ENCODE measurements at regions of chr20 and their contacts with region 1.

Region 1: GRCh38 chr20:35664544-35665221 is at the starts of genes CPNE1 and RBM12:
- DNase-seq: peak; percentile 92
- H3K4me3 ChIP-seq: peak within 1 kb of the TSS; percentile 54
- H3K27ac ChIP-seq: peak within 1 kb of the TSS; percentile 89
- H3K4me1 ChIP-seq: peaks cover 11% of the 10 kb centered on the region
- H3K27me3 ChIP-seq: no peaks in the 10 kb centered on the region
- CTCF ChIP-seq: no peak
- total RNA-seq, gene CPNE1: 137 to 152 TPM
- total RNA-seq, gene RBM12: 63.8 to 74.5 TPM

Region 2: DNA sequence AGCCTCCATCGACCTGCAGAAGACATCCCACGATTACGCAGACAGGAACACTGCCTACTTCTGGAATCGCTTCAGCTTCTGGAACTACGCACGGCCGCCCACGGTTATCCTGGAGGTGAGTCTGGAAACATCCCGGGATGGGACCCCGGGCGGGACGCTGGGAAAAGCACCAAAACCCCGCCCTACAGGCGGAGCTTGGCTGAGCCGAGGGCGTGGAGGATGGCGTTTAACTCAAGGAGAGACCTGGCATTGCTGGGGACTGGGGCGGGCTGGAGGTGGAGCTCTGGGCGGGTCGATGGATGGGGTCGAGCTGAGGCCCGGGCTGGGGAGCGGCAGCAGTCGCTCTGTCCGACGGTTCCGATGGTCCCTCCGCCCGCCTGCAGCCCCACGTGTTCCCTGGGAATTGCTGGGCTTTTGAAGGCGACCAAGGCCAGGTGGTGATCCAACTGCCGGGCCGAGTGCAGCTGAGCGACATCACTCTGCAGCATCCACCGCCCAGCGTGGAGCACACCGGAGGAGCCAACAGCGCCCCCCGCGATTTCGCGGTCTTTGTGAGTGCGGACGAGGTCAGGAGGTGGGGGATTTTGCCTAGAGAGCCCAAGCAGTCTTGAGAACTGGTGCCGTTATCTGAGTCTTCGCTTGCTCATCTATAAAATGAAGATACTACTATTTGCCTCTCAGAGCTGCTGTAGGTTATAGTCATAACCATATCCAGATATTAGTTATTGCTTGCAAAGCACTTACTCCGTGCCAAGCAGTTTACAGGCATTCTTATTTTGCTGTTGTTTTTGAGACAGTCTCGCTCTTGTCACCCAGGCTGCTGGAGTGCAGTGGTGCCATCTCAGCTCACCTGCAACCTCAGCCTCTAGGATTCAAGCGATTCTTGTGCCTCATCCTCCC is 45.2 kb before region 1 on chr20:
- intact Hi-C with region 1: loop called (anchors 5 kb)
- DNase-seq: peak; percentile 92
- H3K4me3 ChIP-seq: peak overlapping the region; percentile 53
- H3K27ac ChIP-seq: no peak overlapping the region
- H3K4me1 ChIP-seq: peaks cover 12% of the 10 kb centered on the region
- H3K27me3 ChIP-seq: no peaks in the 10 kb centered on the region
- CTCF ChIP-seq: no peak

Region 3: GRCh38 chr20:35629427-35630145 is 35.1 kb before region 1 on chr20:
- intact Hi-C with region 1: no loop called
- DNase-seq: no peak
- H3K4me3 ChIP-seq: no peak overlapping the region
- H3K27ac ChIP-seq: no peak overlapping the region
- H3K4me1 ChIP-seq: no peaks in the 10 kb centered on the region
- H3K27me3 ChIP-seq: no peaks in the 10 kb centered on the region
- CTCF ChIP-seq: no peak

Measured in colonic mucosa (tissue), 4 donors.